Sciatic nerve (tissue), 2 donors: ENCODE measurements at regions of chr11 and their contacts with region 1.

Region 1: DNA sequence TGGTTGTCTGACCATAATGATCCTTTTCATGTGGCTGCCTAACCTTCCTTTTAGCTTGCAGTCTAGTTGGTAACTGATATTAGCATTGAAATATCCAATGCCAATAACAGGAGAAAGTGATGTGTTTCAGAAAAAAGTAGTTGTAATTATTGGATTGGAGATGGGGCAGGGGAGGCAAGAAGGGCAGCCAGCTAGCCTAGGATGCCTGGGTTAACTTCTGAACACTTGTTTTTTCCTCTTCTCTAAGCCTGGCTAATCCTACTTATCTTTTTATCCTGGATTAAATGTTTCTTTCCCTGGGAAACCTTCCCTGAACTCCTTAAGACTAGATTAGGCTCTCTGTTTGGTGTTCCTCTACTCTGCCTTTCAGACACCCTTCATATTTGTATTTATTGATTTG is 380.2 kb downstream of the TMEM135 start:
- DNase-seq: no peak
- ATAC-seq: no peak

Region 2: GRCh38 chr11:87352759-87353707 is 64.9 kb before region 1 on chr11:
- intact Hi-C with region 1: loop called (anchors 5 kb)
- DNase-seq: peak; percentile 94
- ATAC-seq: peak; percentile 94